HCT116 (cell line): ENCODE measurements at regions of chr4 and their contacts with region 1.

Region 1: GRCh38 chr4:96352051-96352517 is 512.2 kb downstream of the PDHA2 start:
- DNase-seq: peak; percentile 34
- ATAC-seq: peak; percentile 62; the same call in 1 of the 2 replicates
- H3K4me3 ChIP-seq: no peak overlapping the region
- H3K27ac ChIP-seq: no peak overlapping the region
- H3K4me1 ChIP-seq: no peaks in the 10 kb centered on the region
- H3K27me3 ChIP-seq: no peaks in the 10 kb centered on the region
- CTCF ChIP-seq: peak; percentile 32 to 67 (median 48); a peak in 4 of 6 replicates
- POLR2A ChIP-seq: no peak
- RAD21 ChIP-seq: peak; percentile 74

Region 2: DNA sequence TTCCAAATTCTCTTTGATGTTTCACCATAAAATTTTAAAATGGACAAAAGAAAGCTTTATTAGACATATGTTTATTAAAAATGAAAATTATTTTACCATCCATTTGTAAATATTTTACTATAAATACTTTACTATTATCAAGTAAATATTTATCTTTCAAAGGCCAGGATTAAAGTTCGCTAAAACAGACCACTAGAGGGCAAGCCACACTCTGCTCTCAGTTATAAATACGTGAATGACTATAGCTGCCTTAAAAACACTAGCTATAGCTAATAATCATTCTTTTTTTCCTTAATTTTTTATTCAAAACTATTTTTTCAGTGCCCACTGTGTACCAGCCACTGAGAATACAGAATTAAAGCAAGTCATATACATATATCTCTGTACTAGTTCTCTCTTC is 841.9 kb before region 1 on chr4:
- CTCF ChIA-PET with region 1: interaction called, 5 read pairs
- POLR2A ChIA-PET with region 1: no interaction called
- RAD21 ChIA-PET with region 1: no interaction called
- intact Hi-C with region 1: loop called (anchors 5 kb)
- DNase-seq: no peak
- ATAC-seq: peak; percentile 44; the same call in 1 of the 2 replicates
- H3K4me3 ChIP-seq: peak overlapping the region in 1 of 2 experiments; percentile 3; a peak in 1 of 4 replicates
- H3K27ac ChIP-seq: peak overlapping the region; percentile 57; the same call in 1 of the 2 replicates
- H3K4me1 ChIP-seq: peaks cover 32 to 64% of the 10 kb centered on the region in 2 experiments
- H3K27me3 ChIP-seq: no peaks in the 10 kb centered on the region
- CTCF ChIP-seq: peak; percentile 48 to 63 (median 63); a peak in 5 of 6 replicates
- POLR2A ChIP-seq: no peak
- RAD21 ChIP-seq: peak; percentile 66

Region 3: DNA sequence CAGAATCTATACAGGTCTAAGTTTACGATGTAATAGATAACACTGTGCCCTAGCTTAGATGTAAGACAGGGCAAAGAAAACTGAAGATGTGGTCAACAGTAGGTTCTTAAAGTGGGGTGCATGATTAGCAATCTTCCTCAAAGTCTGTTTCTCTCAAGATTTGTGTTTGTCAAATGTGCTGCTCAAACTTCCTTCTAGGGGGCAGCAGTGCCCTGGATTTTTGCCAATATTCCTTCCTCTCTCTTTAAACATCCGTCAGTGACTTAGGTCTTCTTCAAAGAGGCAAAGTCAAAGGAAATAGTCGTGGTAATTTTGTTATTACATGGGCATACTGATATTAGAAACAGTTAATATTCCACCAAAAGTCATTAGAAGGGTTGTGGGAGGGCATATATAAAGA is 516.4 kb before region 1 on chr4:
- CTCF ChIA-PET with region 1: no interaction called
- POLR2A ChIA-PET with region 1: no interaction called
- RAD21 ChIA-PET with region 1: no interaction called
- intact Hi-C with region 1: loop called (anchors 10 kb)
- DNase-seq: peak; percentile 24
- ATAC-seq: peak; percentile 52; the same call in 1 of the 2 replicates
- H3K4me3 ChIP-seq: no peak overlapping the region
- H3K27ac ChIP-seq: no peak overlapping the region
- H3K4me1 ChIP-seq: no peaks in the 10 kb centered on the region
- H3K27me3 ChIP-seq: no peaks in the 10 kb centered on the region
- CTCF ChIP-seq: peak; percentile 23 to 66 (median 50); a peak in 4 of 6 replicates
- POLR2A ChIP-seq: no peak
- RAD21 ChIP-seq: peak; percentile 39; the same call in 1 of the 2 replicates

Region 4: GRCh38 chr4:96154676-96155075 is 197.4 kb before region 1 on chr4:
- CTCF ChIA-PET with region 1: no interaction called
- POLR2A ChIA-PET with region 1: no interaction called
- RAD21 ChIA-PET with region 1: no interaction called
- intact Hi-C with region 1: no loop called
- DNase-seq: no peak
- ATAC-seq: no peak
- H3K4me3 ChIP-seq: no peak overlapping the region
- H3K27ac ChIP-seq: no peak overlapping the region
- H3K4me1 ChIP-seq: no peaks in the 10 kb centered on the region
- H3K27me3 ChIP-seq: no peaks in the 10 kb centered on the region
- CTCF ChIP-seq: no peak
- POLR2A ChIP-seq: no peak
- RAD21 ChIP-seq: no peak